Posterior cingulate gyrus (tissue), 11 donors: ENCODE measurements at regions of chr2 and their contacts with region 1.

Region 1: DNA sequence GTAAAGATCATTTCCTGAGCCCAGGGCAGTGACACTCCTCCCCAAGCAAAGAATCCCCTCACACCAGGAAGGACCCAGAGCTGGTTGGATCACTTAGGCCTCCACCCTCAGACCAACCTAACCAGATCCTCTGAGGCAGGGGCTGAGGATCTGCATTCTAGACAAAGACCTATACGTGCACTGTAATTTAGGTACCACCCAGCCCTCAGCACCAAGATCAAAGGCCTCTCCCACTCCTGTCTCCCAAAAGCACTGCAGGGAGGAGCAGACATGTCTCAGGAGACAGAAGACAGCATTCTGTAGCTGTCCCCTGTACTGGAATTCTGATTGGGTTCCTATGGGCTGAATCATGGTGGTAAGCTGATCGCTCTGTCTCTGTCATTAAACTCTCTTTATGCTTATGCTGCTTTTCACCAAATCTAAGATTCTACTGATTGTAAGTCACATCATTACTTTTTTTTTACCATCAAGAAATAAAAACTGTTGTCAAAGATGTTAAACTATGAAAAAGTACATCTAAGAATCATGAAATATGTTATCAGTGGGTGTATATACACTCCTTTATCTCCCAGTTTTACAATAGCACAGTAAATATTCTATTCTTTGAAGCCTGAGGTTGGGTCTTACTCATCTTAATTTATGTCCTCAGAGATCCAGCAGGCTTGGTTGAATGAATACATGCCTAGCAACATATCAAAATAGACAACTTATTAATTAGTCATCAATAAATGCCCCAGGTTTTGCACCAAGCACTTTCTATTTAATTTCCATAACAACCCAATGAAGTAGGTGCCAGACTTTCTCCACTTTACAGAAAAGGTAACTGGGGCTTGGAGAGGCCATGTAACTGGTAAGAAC is 28.3 kb downstream of the MCFD2 start:
- DNase-seq: no peak

Region 2: DNA sequence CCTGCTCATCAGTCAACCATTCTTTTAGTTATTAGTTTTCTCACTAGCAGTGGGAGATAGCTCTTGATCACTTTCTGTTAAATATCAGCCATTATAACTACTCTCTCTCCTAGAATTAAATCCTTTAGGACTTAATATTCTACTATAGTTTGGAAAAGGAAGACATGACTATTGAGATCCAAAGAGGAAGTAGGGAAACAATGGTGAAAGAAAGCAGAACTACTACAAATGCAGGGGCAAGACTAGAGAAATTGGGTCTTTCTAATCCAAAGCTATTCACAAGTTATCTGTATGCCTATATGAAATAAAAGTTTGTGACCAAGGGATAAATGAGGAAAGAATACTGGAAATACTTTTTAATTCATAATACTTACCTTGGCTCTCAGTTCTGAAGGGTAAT is 1341.3 kb before region 1 on chr2:
- intact Hi-C with region 1: no loop called
- DNase-seq: no peak

Region 3: DNA sequence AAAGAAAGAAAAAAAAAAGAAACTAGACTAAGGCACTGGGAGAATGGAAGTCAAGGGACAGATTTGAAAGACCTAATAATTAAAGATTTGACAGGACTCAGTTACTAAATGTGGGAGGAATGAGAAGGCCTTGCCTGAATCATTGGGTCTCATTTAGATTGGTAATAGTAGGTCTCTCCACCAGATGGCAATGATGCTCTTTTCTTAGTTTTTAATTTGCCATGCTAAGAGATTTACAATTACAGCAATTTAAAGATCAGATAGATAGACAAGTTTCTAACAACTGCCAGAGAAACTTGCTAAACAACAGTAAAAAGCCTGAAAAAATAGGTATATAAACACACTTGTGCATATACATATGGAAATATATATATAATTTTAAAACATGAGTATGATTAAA is 254.9 kb before region 1 on chr2:
- intact Hi-C with region 1: loop called (anchors 2 kb)
- DNase-seq: no peak

Region 4: DNA sequence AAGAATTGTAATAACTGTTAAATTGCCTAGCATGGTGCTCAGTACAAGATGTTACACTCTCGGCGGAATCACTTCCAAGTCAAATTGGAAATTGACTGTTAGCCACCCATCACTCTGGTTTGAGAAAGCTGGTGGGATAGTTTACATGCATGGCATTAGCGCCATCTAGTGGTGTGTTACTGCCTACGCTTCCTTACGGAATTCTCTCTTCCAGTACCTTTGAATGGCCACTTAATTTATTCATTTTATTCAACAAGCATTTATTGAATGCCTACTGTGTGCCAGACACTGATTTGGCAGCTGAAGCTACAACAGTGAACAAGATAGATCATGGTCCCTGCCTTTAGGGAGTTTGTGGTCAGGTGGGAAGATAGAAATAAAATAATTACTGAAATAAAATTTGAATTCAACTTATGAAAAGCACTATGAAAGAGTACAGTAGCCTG is 236.7 kb before region 1 on chr2:
- intact Hi-C with region 1: loop called (anchors 5 kb)
- DNase-seq: peak in 7 of 10 donors; percentile 28 to 86 (median 72)

Region 5: GRCh38 chr2:46943881-46944798 is 56.9 kb after region 1 on chr2:
- intact Hi-C with region 1: no loop called
- DNase-seq: no peak